ENCODE measurements at regions of chr2 and their contacts with region 1.

Region 1: DNA sequence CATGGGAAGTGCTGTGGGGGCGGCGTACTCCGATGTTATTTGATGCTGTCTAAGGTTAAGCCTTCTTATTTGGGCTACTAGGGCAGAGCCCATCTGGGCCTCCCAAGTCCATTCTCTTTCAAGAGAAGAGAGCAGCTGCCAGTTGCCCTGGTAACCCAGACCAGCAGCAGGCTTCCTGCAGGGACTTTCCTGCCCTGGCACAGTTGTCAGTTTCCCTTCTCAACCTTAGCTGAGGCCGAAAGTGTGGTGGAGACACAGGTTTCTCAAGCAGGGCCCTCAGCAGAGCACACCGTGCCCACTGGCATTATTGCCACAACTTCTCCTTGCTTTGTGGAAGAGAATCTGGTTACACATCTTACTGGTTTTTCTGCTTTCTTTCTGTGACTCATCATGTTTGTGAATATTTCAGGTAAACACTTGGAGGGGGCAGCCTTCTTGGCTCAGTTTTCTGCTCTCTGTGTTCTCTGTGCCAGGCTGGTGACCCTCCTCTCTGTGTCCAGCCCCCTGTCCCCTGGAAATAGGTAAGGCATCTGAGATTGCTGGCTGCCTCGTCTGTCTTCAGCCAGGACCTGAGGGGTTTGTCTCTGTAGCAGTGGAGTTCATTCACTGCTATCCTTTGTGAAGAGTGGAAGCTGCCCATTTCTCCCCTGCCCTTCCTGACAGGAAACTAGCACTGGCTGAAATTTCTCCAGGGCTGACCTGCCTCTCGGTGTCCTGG is 111.0 kb downstream of the B3GNT2 start:
- DNase-seq: peak; percentile 73
- H3K4me3 Mint-ChIP-seq: no peak overlapping the region
- H3K27ac Mint-ChIP-seq: peak overlapping the region; percentile 90
- H3K4me1 Mint-ChIP-seq: peaks cover 74% of the 10 kb centered on the region
- H3K27me3 Mint-ChIP-seq: no peaks in the 10 kb centered on the region

Region 2: DNA sequence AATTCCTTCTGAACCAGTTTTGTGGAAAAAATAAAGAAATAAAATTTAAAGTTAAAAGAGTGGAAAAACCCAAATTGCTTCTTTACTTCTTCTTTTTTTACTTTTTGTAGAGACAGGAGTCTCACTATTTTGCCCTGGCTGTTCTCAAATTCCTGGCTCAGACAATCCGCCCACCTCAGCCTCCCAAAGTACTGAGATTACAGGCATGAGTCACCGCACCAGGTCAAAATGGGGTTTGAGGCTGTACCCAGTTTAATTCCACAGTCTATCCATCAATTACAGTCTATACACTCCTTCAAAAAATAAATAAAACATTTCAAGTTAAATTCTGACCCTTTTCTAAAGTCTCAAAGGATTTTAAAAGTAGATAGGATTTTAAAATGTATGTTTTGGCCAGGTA is 573.3 kb before region 1 on chr2:
- CTCF ChIA-PET with region 1: no interaction called
- intact Hi-C with region 1: no loop called
- DNase-seq: no peak
- H3K4me3 Mint-ChIP-seq: no peak overlapping the region
- H3K27ac Mint-ChIP-seq: no peak overlapping the region
- H3K4me1 Mint-ChIP-seq: no peaks in the 10 kb centered on the region
- H3K27me3 Mint-ChIP-seq: no peaks in the 10 kb centered on the region

Region 3: DNA sequence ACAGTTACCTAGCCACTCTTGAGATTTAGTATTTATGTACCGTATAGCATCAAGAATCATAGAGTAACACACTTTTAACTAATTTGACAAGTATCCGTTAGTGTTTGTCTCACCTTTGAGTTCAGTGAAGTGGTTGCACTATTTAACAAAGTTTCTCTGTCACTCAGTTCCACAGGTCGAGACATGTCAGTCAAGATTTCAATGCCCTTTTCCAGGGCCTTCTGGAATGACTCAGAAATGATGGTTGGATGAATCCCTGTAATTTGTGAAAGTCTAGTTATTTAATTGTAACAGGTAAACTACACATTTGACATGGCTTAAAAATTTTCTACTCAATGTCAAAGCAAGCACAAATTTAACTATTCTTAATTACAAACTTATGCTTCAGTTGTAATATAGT is 428.2 kb before region 1 on chr2:
- CTCF ChIA-PET with region 1: no interaction called
- intact Hi-C with region 1: no loop called
- DNase-seq: no peak
- H3K4me3 Mint-ChIP-seq: no peak overlapping the region
- H3K27ac Mint-ChIP-seq: peak overlapping the region; percentile 31
- H3K4me1 Mint-ChIP-seq: no peaks in the 10 kb centered on the region
- H3K27me3 Mint-ChIP-seq: no peaks in the 10 kb centered on the region

Region 4: GRCh38 chr2:61905372-61906185 is 401.3 kb before region 1 on chr2 and contains the start of gene COMMD1:
- CTCF ChIA-PET with region 1: no interaction called
- intact Hi-C with region 1: loop called (anchors 5 kb)
- DNase-seq: peak; percentile 92
- H3K4me3 Mint-ChIP-seq: peak within 1 kb of the TSS; percentile 96
- H3K27ac Mint-ChIP-seq: peak within 1 kb of the TSS; percentile 63
- H3K4me1 Mint-ChIP-seq: peaks cover 25% of the 10 kb centered on the region
- H3K27me3 Mint-ChIP-seq: no peaks in the 10 kb centered on the region
- total RNA-seq, gene COMMD1: 26.9 to 29.5 TPM

Region 5: DNA sequence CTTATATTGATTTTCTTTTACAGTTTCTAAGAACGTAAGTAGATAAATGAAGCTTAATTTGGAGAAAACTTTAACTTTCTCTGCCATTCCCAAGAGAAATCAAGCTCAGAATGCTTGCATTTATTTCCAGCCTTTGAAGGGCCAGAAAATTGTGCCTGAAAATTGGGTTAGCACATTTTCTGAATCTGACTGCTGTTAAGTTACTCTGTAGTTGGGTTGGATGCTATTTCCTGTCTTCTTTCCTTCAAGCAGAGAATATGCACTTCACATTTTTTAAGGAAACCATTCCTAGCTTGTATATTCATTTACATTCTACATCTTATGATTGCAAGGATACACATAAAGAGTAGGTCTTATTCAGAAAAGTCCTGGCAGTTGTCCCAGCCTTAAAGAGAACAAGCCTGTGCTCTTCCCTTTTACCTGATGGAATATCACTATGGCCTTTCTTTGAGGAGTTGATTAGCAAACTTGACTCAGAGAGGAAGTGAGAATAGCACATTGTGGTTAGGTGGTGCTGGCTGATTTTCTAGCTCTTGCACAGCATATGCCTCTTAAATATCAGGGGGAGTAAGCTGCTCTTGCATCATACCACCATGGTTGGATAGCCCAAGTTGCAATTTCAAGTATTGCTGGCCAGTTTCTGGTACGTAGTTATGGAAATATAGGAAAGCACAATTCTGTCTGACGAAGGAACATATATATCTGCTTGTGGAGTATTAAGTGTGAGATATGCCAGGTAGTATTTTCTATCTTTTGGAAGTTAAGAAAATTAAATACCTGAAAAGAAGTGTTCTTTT is 267.7 kb before region 1 on chr2:
- CTCF ChIA-PET with region 1: no interaction called
- intact Hi-C with region 1: loop called (anchors 2 kb)
- DNase-seq: peak; percentile 58
- H3K4me3 Mint-ChIP-seq: no peak overlapping the region
- H3K27ac Mint-ChIP-seq: no peak overlapping the region
- H3K4me1 Mint-ChIP-seq: peaks cover 17% of the 10 kb centered on the region
- H3K27me3 Mint-ChIP-seq: no peaks in the 10 kb centered on the region

Region 6: GRCh38 chr2:62216616-62217015 is 90.3 kb before region 1 on chr2:
- CTCF ChIA-PET with region 1: interaction called, 3 read pairs
- intact Hi-C with region 1: loop called (anchors 5 kb)
- DNase-seq: peak; percentile 30
- H3K4me3 Mint-ChIP-seq: no peak overlapping the region
- H3K27ac Mint-ChIP-seq: no peak overlapping the region
- H3K4me1 Mint-ChIP-seq: peaks cover 95% of the 10 kb centered on the region
- H3K27me3 Mint-ChIP-seq: no peaks in the 10 kb centered on the region

Region 7: DNA sequence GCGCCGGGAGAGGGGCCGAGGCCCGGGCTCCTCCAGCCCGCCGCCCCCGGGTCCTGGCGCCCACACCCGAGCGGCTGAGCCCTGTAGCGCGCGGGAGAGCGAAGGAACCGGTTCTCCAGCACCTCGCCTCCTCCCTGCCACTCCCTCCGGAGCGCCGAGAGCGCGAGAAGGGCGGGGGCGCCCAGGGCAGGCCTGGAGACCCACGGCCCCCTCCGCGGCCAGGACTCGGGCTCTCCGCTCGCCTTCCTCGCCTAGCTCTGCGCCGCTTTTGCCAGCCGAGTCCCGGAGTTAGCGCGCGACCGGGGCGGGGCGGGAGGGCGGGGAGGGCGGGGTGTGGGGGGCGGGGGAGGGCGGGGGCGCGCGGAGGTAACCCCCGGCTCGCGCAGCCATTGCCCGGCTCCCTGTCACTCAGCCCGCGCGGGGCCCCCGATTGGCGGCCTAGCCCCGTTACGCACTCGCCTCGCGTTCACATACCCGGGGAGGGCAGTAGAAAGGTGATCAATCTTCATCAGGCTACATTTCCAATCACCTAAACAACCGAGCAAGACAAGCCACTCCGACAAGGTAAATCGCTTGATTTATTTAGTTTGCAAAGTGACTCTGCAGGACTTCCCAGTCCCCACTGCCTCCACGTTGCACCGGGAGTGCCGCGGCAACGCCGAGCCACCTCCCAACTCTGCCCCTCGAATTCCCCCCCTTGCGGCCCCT is 743.6 kb after region 1 on chr2 and contains the start of gene OTX1:
- CTCF ChIA-PET with region 1: no interaction called
- intact Hi-C with region 1: loop called (anchors 10 kb)
- DNase-seq: peak; percentile 55
- H3K4me3 Mint-ChIP-seq: peak within 1 kb of the TSS; percentile 80
- H3K27ac Mint-ChIP-seq: no peak within 1 kb of the TSS
- H3K4me1 Mint-ChIP-seq: peaks cover 61% of the 10 kb centered on the region
- H3K27me3 Mint-ChIP-seq: peaks cover 79% of the 10 kb centered on the region
- total RNA-seq, gene OTX1: not detected

Measured in activated naive CD4-positive, alpha-beta T cell treated with anti-CD3 and anti-CD28 coated beads for 36 hours (primary cell).